Activated CD4-positive, alpha-beta T cell treated with anti-CD3 and anti-CD28 coated beads, Interleukin-2, amount 10 ng/mL, durations not matched to agents 24 days and 14 days (primary cell): ENCODE measurements at regions of chr12 and their contacts with region 1.

Region 1: GRCh38 chr12:10304161-10304574 is 3.5 kb upstream of the KLRD1 start:
- DNase-seq: peak; percentile 69
- H3K4me3 Mint-ChIP-seq: no peak overlapping the region
- H3K27ac Mint-ChIP-seq: peak overlapping the region; percentile 53
- H3K4me1 Mint-ChIP-seq: peaks cover 37% of the 10 kb centered on the region
- H3K27me3 Mint-ChIP-seq: peaks cover 26% of the 10 kb centered on the region

Region 2: DNA sequence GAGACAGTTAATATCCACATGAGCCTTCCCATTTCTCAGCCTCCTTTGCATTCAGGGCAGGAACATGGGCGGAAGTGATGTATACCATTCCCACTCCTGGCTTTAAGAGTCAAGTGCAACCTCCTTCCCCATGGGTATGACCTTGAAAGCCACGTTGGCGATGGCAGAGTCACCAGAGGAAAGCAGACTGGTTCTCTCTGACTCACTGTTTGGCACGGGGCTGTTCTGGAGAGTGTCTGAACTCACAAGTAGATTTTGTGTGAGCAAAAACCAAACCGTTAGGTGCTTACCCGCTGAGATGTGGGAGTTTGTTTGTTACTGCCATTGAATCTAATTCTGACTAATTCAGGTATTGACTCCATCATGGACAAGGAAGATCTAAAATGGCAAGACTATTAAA is 1059.3 kb before region 1 on chr12:
- intact Hi-C with region 1: loop called (anchors 2 kb)
- DNase-seq: peak; percentile 66
- H3K4me3 Mint-ChIP-seq: peak overlapping the region; percentile 15
- H3K27ac Mint-ChIP-seq: peak overlapping the region; percentile 96
- H3K4me1 Mint-ChIP-seq: peaks cover 29% of the 10 kb centered on the region
- H3K27me3 Mint-ChIP-seq: peaks cover 16% of the 10 kb centered on the region

Region 3: GRCh38 chr12:10190558-10191388 is 113.4 kb before region 1 on chr12:
- intact Hi-C with region 1: no loop called
- DNase-seq: peak; percentile 83
- H3K4me3 Mint-ChIP-seq: no peak overlapping the region
- H3K27ac Mint-ChIP-seq: no peak overlapping the region
- H3K4me1 Mint-ChIP-seq: peaks cover 4% of the 10 kb centered on the region
- H3K27me3 Mint-ChIP-seq: peaks cover 24% of the 10 kb centered on the region

Region 4: GRCh38 chr12:10235761-10236631 is 68.2 kb before region 1 on chr12:
- intact Hi-C with region 1: no loop called
- DNase-seq: peak; percentile 77
- H3K4me3 Mint-ChIP-seq: no peak overlapping the region
- H3K27ac Mint-ChIP-seq: no peak overlapping the region
- H3K4me1 Mint-ChIP-seq: no peaks in the 10 kb centered on the region
- H3K27me3 Mint-ChIP-seq: peaks cover 20% of the 10 kb centered on the region

Region 5: GRCh38 chr12:10285919-10286318 is 18.2 kb before region 1 on chr12:
- intact Hi-C with region 1: loop called (anchors 2 kb)
- DNase-seq: no peak
- H3K4me3 Mint-ChIP-seq: no peak overlapping the region
- H3K27ac Mint-ChIP-seq: no peak overlapping the region
- H3K4me1 Mint-ChIP-seq: no peaks in the 10 kb centered on the region
- H3K27me3 Mint-ChIP-seq: peaks cover 17% of the 10 kb centered on the region

Region 6: GRCh38 chr12:10320643-10321042 is 16.5 kb after region 1 on chr12:
- intact Hi-C with region 1: loop called (anchors 1 kb)
- DNase-seq: no peak
- H3K4me3 Mint-ChIP-seq: peak overlapping the region; percentile 0
- H3K27ac Mint-ChIP-seq: peak overlapping the region; percentile 77
- H3K4me1 Mint-ChIP-seq: peaks cover 15% of the 10 kb centered on the region
- H3K27me3 Mint-ChIP-seq: peaks cover 7% of the 10 kb centered on the region

Region 7: DNA sequence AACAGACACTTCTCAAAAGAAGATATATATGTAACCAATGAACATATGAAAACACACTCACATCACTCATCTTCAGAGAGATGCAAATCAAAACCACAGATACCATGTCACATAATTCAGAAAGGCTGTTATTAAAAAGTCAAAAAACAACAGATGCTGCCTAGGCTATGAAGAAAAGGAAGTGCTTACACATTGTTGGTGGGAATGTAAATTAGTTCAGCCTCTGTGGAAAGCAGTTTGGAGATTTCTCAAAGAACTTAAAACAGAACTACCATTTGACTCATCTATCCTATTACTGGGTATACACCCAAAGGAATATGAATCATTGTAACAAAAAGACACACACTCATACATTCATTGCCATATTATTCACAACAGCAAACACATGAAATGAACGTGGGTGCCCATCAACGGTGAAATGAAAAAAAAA is 236.6 kb after region 1 on chr12:
- intact Hi-C with region 1: loop called (anchors 1 kb)
- DNase-seq: no peak
- H3K4me3 Mint-ChIP-seq: no peak overlapping the region
- H3K27ac Mint-ChIP-seq: no peak overlapping the region
- H3K4me1 Mint-ChIP-seq: peaks cover 7% of the 10 kb centered on the region
- H3K27me3 Mint-ChIP-seq: peaks cover 36% of the 10 kb centered on the region